GM10248 (cell line): ENCODE measurements at regions of chr9 and their contacts with region 1.

Region 1: DNA sequence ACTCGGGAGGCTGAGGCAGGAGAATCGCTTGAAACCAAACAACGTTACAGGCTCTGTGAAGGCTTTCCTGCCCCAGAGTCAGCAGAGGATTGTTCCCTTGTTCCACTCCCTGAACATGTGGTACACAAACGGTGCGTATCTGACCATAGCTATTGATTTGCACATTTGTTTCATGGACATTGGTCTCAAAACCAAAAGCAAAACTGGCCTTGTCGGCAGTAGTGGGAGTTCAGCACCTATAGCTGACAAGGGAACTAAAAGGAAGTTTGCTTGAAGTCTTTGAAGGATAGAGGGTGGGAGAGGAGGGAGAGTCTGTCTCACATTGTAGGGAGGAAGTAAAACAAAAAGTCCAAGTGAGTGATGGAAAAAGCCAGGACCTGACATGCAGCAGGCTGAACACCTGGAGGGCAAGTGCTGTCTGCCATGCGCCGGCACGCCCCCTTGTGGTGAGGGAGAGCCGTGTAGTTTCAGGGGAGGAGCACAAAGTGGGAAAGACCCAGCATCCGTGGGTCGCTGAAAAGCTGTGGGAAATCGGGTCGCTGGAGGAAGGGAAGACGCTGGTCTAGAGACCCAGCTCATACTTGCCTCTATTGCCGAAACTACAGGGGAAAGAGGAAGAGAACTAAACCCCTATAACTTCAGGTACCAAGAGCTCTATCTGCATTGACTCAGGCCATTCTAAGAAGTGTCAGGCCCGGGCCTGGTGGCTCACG is 58.0 kb downstream of the RAD23B start:
- DNase-seq: peak; percentile 85
- CTCF ChIP-seq: peak; percentile 92

Region 2: DNA sequence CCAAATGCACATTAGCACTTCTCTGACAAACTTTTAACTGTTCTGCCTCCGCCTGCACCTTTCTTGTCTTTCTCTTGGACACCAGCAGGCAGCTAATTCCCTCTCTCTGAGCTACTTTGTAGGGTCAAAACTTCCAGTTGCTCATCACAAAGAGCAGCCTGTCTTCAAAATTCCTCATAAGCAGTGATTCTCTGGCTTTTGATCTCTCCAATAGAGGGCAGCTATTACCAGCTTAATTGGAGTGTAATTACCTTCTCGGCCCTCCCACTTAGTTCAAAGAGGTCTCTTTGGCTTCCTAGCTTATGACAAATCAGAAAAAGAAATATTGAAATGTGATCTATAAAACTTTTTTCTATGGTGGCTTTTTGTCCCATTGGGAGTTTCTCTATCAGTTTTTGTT is 101.6 kb before region 1 on chr9:
- CTCF ChIA-PET with region 1: interaction called, 31 read pairs
- POLR2A ChIA-PET with region 1: no interaction called
- DNase-seq: no peak
- CTCF ChIP-seq: peak; percentile 47

Region 3: DNA sequence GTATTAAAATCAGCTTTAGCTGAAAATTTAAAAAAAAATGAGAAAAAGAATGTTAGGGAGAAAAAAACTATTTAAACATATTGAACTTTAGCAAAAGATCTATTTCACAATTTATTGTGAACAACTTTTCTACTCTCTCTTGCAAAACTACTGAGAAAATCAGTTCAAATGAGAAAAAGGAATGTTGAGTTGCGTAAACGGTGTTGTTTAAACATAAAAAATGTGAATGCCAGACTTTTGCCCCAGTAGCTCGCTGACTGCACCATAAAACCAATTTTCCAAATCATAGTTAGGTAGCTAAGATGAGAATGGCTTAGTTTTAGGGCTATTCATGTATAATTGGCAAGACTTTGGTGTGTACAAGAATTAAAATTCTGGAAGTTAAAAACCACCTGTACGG is 71.4 kb before region 1 on chr9:
- CTCF ChIA-PET with region 1: interaction called, 18 read pairs
- POLR2A ChIA-PET with region 1: no interaction called
- DNase-seq: no peak
- CTCF ChIP-seq: no peak

Region 4: DNA sequence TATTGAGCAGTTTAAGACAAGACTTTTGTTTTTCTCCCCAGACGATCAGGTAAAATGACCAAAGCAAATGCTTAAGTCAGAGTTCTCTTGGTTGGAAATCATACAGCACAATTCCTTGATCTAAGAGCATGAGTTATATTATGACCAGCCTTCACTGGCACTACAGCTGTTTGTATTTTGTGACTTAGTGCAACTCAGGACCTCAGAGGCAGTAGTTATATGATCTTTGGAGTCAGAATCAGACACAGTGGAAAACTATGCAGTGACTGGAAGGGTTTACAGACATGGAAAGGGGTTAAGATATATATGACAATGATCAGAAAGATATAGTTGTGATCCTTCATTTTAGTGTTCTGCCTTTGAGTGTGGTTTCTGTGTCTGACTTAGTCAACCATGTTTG is 33.7 kb before region 1 on chr9:
- CTCF ChIA-PET with region 1: interaction called, 38 read pairs
- POLR2A ChIA-PET with region 1: no interaction called
- DNase-seq: no peak
- CTCF ChIP-seq: no peak

Region 5: GRCh38 chr9:107323836-107324585 is 17.1 kb before region 1 on chr9:
- CTCF ChIA-PET with region 1: interaction called, 41 read pairs
- POLR2A ChIA-PET with region 1: no interaction called
- DNase-seq: no peak
- CTCF ChIP-seq: no peak

Region 6: DNA sequence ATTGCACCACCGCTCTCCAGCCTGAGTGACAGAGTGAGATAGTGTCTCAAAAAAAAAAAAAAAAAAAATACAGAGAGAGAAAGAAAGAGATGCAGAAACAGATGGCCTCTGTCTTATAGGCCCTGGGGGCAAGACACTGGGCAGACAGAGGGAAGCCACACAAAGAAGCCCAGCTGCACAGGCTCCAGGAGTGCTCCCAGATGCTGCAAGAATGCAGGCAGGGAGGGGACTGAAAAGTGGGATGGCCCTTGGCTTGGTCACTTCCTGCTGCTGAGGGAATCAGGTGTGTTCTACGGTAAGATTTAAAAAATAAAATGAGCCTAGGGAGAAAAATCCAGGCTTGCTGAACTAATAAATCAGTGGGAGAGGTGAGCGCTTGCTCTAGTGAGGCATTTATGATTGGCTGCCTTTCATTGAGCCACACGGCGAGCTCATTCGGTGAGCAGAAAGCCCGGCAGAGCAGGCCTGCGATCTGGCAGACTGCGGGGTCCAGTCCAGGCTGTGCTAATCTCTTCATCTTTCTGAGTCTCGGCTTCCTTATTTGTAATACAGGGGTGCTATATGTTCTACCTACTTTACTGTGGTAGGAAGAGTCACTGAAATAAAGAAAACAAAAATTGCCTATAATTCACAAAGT is 22.6 kb after region 1 on chr9:
- CTCF ChIA-PET with region 1: interaction called, 18 read pairs
- POLR2A ChIA-PET with region 1: no interaction called
- DNase-seq: no peak
- CTCF ChIP-seq: no peak